HEK293 (cell line): ENCODE measurements at regions of chr1 and their contacts with region 1.

Region 1: GRCh38 chr1:152189657-152190442 is 30.8 kb upstream of the RPTN start:
- H3K4me3 ChIP-seq: peak overlapping the region; percentile 32; the same call in 1 of the 2 replicates
- H3K27ac ChIP-seq: no peak overlapping the region
- H3K4me1 ChIP-seq: no peaks in the 10 kb centered on the region
- CTCF ChIP-seq: peak; percentile 34; the same call in 1 of the 2 replicates

Region 2: GRCh38 chr1:152011421-152011820 is 178.4 kb before region 1 on chr1:
- CTCF ChIA-PET with region 1: no interaction called
- POLR2A ChIA-PET with region 1: no interaction called
- H3K4me3 ChIP-seq: no peak overlapping the region
- H3K27ac ChIP-seq: no peak overlapping the region
- H3K4me1 ChIP-seq: no peaks in the 10 kb centered on the region
- CTCF ChIP-seq: no peak

Region 3: GRCh38 chr1:152141974-152142584 is 47.8 kb before region 1 on chr1:
- CTCF ChIA-PET with region 1: interaction called, 122 read pairs
- POLR2A ChIA-PET with region 1: no interaction called
- H3K4me3 ChIP-seq: no peak overlapping the region
- H3K27ac ChIP-seq: no peak overlapping the region
- H3K4me1 ChIP-seq: no peaks in the 10 kb centered on the region
- CTCF ChIP-seq: peak; percentile 62

Region 4: GRCh38 chr1:152175544-152175943 is 14.3 kb before region 1 on chr1:
- CTCF ChIA-PET with region 1: interaction called, 33 read pairs
- POLR2A ChIA-PET with region 1: no interaction called
- H3K4me3 ChIP-seq: no peak overlapping the region
- H3K27ac ChIP-seq: no peak overlapping the region
- H3K4me1 ChIP-seq: no peaks in the 10 kb centered on the region
- CTCF ChIP-seq: no peak

Region 5: GRCh38 chr1:152398812-152399698 is 209.2 kb after region 1 on chr1:
- CTCF ChIA-PET with region 1: interaction called, 10 read pairs
- POLR2A ChIA-PET with region 1: no interaction called
- H3K4me3 ChIP-seq: no peak overlapping the region
- H3K27ac ChIP-seq: no peak overlapping the region
- H3K4me1 ChIP-seq: peaks cover 6% of the 10 kb centered on the region
- CTCF ChIP-seq: peak; percentile 26; the same call in 1 of the 2 replicates

Region 6: GRCh38 chr1:152525080-152525641 is 335.3 kb after region 1 on chr1:
- CTCF ChIA-PET with region 1: no interaction called
- POLR2A ChIA-PET with region 1: no interaction called
- H3K4me3 ChIP-seq: no peak overlapping the region
- H3K27ac ChIP-seq: no peak overlapping the region
- H3K4me1 ChIP-seq: no peaks in the 10 kb centered on the region
- CTCF ChIP-seq: no peak